Transverse colon (tissue), 4 donors: ENCODE measurements at regions of chr11 and their contacts with region 1.

Region 1: GRCh38 chr11:108713076-108713790 is 48.4 kb downstream of the DDX10 start:
- DNase-seq: no peak
- H3K4me3 ChIP-seq: no peak overlapping the region
- H3K27ac ChIP-seq: no peak overlapping the region
- H3K4me1 ChIP-seq: no peaks in the 10 kb centered on the region
- H3K27me3 ChIP-seq: no peaks in the 10 kb centered on the region
- CTCF ChIP-seq: no peak
- EP300 ChIP-seq: no peak
- POLR2A ChIP-seq: no peak

Region 2: GRCh38 chr11:109697140-109697843 is 984.1 kb after region 1 on chr11:
- in situ Hi-C with region 1: loop called in 1 of 4 experiments (anchors 25 kb)
- intact Hi-C with region 1: no loop called
- DNase-seq: no peak
- H3K4me3 ChIP-seq: no peak overlapping the region
- H3K27ac ChIP-seq: no peak overlapping the region
- H3K4me1 ChIP-seq: no peaks in the 10 kb centered on the region
- H3K27me3 ChIP-seq: no peaks in the 10 kb centered on the region
- CTCF ChIP-seq: peak; percentile 25 to 58 (median 39)
- EP300 ChIP-seq: no peak
- POLR2A ChIP-seq: no peak

Region 3: GRCh38 chr11:109946322-109946846 is 1233.2 kb after region 1 on chr11:
- in situ Hi-C with region 1: loop called in 1 of 4 experiments (anchors 25 kb)
- intact Hi-C with region 1: no loop called
- DNase-seq: peak; percentile 88
- H3K4me3 ChIP-seq: peak overlapping the region in 1 of 4 donors; percentile 23
- H3K27ac ChIP-seq: peak overlapping the region; percentile 33 to 56 (median 50)
- H3K4me1 ChIP-seq: peaks cover 0 to 9% (median 5%) of the 10 kb centered on the region in 4 donors
- H3K27me3 ChIP-seq: no peaks in the 10 kb centered on the region
- CTCF ChIP-seq: peak; percentile 86 to 96 (median 90)
- EP300 ChIP-seq: no peak
- POLR2A ChIP-seq: no peak